Heart right ventricle (tissue), 16 donors: ENCODE measurements at regions of chrX and their contacts with region 1.

Region 1: DNA sequence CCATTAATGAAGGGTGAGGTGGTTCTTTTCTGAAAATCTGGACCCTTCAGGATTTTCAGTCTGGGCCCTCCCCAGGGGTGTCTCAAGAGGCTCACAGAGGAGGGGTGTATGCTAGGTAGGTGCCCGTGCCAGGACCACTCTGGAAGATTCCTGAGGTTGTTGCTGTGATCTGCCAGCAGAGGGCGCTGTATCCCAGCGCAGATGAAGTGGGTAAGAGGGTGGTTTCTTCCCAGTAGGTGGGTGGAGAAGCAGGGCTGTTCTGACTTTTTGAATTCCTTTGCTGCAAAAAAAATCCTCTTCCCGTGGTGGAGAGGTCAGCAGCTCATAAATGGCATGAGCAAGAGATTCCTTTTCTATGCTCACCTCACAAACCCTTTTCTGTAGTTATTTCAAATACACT is 51.1 kb downstream of the SCML1 start:
- DNase-seq: peak; percentile 11 to 19
- ATAC-seq: peak; percentile 46 to 84 (median 69)
- H3K4me3 ChIP-seq: no peak overlapping the region
- H3K27ac ChIP-seq: no peak overlapping the region
- H3K4me1 ChIP-seq: peaks cover 0 to 7% (median 0%) of the 10 kb centered on the region in 9 donors
- H3K27me3 ChIP-seq: peaks cover 0 to 17% (median 0%) of the 10 kb centered on the region in 7 donors
- CTCF ChIP-seq: peak; percentile 61 to 80 (median 74)

Region 2: GRCh38 chrX:17655211-17656034 is 133.0 kb before region 1 on chrX:
- intact Hi-C with region 1: no loop called
- DNase-seq: peak in 1 of 2 donors; percentile 11
- ATAC-seq: peak; percentile 46 to 70 (median 56)
- H3K4me3 ChIP-seq: peak overlapping the region in 9 of 10 donors; percentile 5 to 44 (median 38)
- H3K27ac ChIP-seq: no peak overlapping the region
- H3K4me1 ChIP-seq: peaks cover 0 to 15% (median 0%) of the 10 kb centered on the region in 9 donors
- H3K27me3 ChIP-seq: peaks cover 0 to 55% (median 0%) of the 10 kb centered on the region in 7 donors
- CTCF ChIP-seq: no peak

Region 3: GRCh38 chrX:18377796-18378195 is 589.4 kb after region 1 on chrX:
- intact Hi-C with region 1: loop called in 1 of 10 experiments (anchors 5 kb)
- DNase-seq: no peak
- ATAC-seq: no peak
- H3K4me3 ChIP-seq: no peak overlapping the region
- H3K27ac ChIP-seq: no peak overlapping the region
- H3K4me1 ChIP-seq: no peaks in the 10 kb centered on the region
- H3K27me3 ChIP-seq: no peaks in the 10 kb centered on the region
- CTCF ChIP-seq: peak in 7 of 9 donors; percentile 23 to 50 (median 40)